B cell (primary cell): ENCODE measurements at regions of chr20 and their contacts with region 1.

Region 1: DNA sequence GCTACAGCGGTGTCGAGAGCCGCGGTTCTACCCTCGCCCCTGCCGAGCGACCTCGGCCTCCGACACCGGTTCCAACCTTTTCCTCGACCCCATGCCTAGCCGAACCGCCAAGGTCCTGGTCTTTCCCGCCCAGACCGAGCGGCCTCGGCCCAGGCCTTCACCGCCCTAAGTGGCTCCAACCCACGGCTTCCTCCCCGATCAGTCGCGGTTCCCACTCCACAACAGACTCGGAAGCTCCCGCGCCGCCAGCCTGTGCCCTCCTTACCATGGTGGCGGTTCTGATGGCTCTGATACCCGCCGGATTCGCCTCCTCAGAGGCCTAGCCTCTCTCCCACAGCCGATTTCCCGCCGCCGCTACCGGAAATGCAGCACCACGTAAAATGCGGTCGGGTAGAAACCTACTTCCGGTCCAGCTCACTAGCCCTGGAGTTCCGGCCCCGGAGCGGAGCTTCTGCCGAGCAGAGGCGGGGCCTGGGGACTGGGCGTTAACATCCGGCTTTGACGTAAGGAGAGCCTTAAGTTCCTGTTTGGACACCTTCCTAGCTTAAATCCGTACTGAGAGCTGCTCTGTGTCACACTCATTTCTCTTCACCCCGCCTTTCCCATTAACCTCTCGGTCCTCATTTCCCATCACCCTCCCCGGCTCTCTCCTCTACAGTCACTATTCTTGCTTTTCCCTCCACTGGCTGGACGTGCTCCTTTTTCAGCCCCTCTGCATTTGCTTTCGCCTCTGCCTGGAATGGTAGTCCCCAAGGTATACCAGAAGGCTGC is at the start of gene SNRPB:
- DNase-seq: peak; percentile 98
- ATAC-seq: peak; percentile 94
- H3K4me3 ChIP-seq: peak within 1 kb of the TSS; percentile 74 to 98 (median 91)
- H3K4me3 Mint-ChIP-seq: peak within 1 kb of the TSS; percentile 99
- H3K27ac ChIP-seq: peak within 1 kb of the TSS; percentile 96 to 98
- H3K27ac Mint-ChIP-seq: peak within 1 kb of the TSS; percentile 100
- H3K4me1 ChIP-seq: peaks cover 19 to 20% of the 10 kb centered on the region in 2 donors
- H3K4me1 Mint-ChIP-seq: peaks cover 37% of the 10 kb centered on the region
- H3K27me3 ChIP-seq: no peaks in the 10 kb centered on the region
- H3K27me3 Mint-ChIP-seq: no peaks in the 10 kb centered on the region
- CTCF ChIP-seq: no peak
- total RNA-seq, gene SNRPB: 117 and 123 TPM in 2 replicates

Region 2: GRCh38 chr20:1392823-1393506 is 1077.6 kb before region 1 on chr20 and contains the start of gene FKBP1A:
- CTCF ChIA-PET with region 1: no interaction called
- POLR2A ChIA-PET with region 1: no interaction called
- intact Hi-C with region 1: loop called (anchors 5 kb)
- DNase-seq: peak; percentile 97
- ATAC-seq: peak; percentile 88
- H3K4me3 ChIP-seq: peak within 1 kb of the TSS; percentile 66 to 93 (median 76)
- H3K4me3 Mint-ChIP-seq: peak within 1 kb of the TSS; percentile 100
- H3K27ac ChIP-seq: peak within 1 kb of the TSS; percentile 82 to 84
- H3K27ac Mint-ChIP-seq: peak within 1 kb of the TSS; percentile 100
- H3K4me1 ChIP-seq: peaks cover 64 to 66% of the 10 kb centered on the region in 2 donors
- H3K4me1 Mint-ChIP-seq: peaks cover 83% of the 10 kb centered on the region
- H3K27me3 ChIP-seq: no peaks in the 10 kb centered on the region
- H3K27me3 Mint-ChIP-seq: no peaks in the 10 kb centered on the region
- CTCF ChIP-seq: no peak
- total RNA-seq, gene FKBP1A: 86.5 and 86.7 TPM in 2 replicates

Region 3: DNA sequence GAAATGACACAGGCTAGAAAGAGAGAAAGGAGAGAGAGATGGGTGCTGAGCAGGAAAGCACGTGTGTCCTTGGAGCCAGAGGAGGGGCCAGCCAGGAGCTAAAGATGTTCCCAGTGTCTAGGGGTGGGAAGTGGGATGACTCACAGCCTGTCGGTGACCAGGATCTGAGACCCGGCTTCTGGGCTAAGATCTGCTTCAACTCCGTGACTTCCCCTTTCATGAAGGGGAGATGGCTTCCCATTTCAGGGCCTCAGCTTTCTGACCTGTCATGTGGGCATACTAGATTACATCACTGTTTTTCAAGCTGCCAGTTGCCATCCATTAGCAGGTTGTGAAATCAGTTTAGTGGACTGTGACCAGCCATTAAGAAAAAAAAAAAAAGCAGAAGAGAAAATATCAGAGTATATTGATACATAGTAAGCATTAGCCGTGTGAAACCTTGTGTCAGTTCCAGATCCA is 169.4 kb before region 1 on chr20:
- CTCF ChIA-PET with region 1: no interaction called
- POLR2A ChIA-PET with region 1: interaction called, 10 read pairs
- intact Hi-C with region 1: no loop called
- DNase-seq: peak; percentile 89
- ATAC-seq: peak; percentile 95
- H3K4me3 ChIP-seq: peak overlapping the region in 2 of 5 experiments; percentile 2 to 27
- H3K4me3 Mint-ChIP-seq: peak overlapping the region; percentile 61
- H3K27ac ChIP-seq: peak overlapping the region; percentile 82 to 91
- H3K27ac Mint-ChIP-seq: peak overlapping the region; percentile 93
- H3K4me1 ChIP-seq: peaks cover 23 to 24% of the 10 kb centered on the region in 2 donors
- H3K4me1 Mint-ChIP-seq: peaks cover 22% of the 10 kb centered on the region
- H3K27me3 ChIP-seq: peaks cover 0 to 6% (median 0%) of the 10 kb centered on the region in 4 experiments
- H3K27me3 Mint-ChIP-seq: no peaks in the 10 kb centered on the region
- CTCF ChIP-seq: no peak

Region 4: GRCh38 chr20:2508631-2509467 is 38.2 kb after region 1 on chr20 and contains the start of gene ZNF343:
- CTCF ChIA-PET with region 1: interaction called, 4 read pairs
- POLR2A ChIA-PET with region 1: interaction called, 4 read pairs
- intact Hi-C with region 1: loop called (anchors 1 kb)
- DNase-seq: peak; percentile 89
- ATAC-seq: peak; percentile 91
- H3K4me3 ChIP-seq: peak within 1 kb of the TSS; percentile 75 to 95 (median 91)
- H3K4me3 Mint-ChIP-seq: peak within 1 kb of the TSS; percentile 100
- H3K27ac ChIP-seq: peak within 1 kb of the TSS; percentile 64 to 77
- H3K27ac Mint-ChIP-seq: peak within 1 kb of the TSS; percentile 99
- H3K4me1 ChIP-seq: peaks cover 8 to 16% of the 10 kb centered on the region in 2 donors
- H3K4me1 Mint-ChIP-seq: peaks cover 20% of the 10 kb centered on the region
- H3K27me3 ChIP-seq: peaks cover 0 to 6% (median 3%) of the 10 kb centered on the region in 4 experiments
- H3K27me3 Mint-ChIP-seq: peaks cover 27% of the 10 kb centered on the region
- CTCF ChIP-seq: no peak
- total RNA-seq, gene ZNF343: 19.8 and 23.4 TPM in 2 replicates

Region 5: GRCh38 chr20:2523919-2524708 is 53.5 kb after region 1 on chr20:
- CTCF ChIA-PET with region 1: interaction called, 11 read pairs
- POLR2A ChIA-PET with region 1: interaction called, 9 read pairs
- intact Hi-C with region 1: loop called (anchors 1 kb)
- DNase-seq: peak; percentile 91
- ATAC-seq: peak; percentile 87
- H3K4me3 ChIP-seq: peak overlapping the region; percentile 52 to 94 (median 84)
- H3K4me3 Mint-ChIP-seq: peak overlapping the region; percentile 90
- H3K27ac ChIP-seq: peak overlapping the region; percentile 49 to 72
- H3K27ac Mint-ChIP-seq: peak overlapping the region; percentile 77
- H3K4me1 ChIP-seq: peaks cover 9 to 19% of the 10 kb centered on the region in 2 donors
- H3K4me1 Mint-ChIP-seq: peaks cover 12% of the 10 kb centered on the region
- H3K27me3 ChIP-seq: peaks cover 0 to 14% (median 3%) of the 10 kb centered on the region in 4 experiments
- H3K27me3 Mint-ChIP-seq: peaks cover 3% of the 10 kb centered on the region
- CTCF ChIP-seq: peak; percentile 97

Region 6: DNA sequence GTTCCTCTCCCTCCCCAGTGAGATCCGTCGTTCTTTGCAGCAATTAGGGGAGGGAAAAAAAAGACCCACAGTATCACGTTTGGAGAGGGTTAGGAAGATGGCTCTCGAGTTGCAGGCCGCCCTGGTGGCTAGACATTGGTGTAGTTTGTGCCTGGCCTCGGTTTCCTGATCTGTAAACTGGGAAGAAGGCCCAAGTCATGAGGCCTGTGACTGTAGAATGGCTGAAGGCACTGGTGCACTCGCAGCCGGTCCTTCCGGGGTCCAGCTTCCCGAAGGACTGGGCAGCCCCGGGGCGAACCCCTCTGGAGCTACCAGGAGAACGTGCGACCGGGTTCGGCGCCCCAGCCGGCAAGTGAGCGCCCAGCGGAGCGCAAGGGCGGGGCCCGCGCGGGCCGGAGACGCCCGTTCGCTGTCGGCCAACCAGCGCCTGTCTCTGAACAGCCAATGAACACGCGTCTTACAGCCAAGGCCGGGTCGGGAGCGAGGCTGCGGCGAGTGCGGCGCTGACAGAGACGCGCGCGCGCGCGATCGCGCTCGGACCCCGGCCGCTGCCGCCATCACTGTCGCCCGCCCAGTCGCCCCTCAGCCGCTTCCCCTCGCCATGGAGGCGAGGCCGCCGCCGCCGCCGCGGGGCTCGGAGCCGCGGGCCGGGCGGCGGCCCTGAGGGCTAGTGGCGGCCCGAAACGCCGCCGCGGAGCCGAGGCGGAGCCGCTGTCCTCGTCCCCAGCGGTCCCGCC is 402.6 kb after region 1 on chr20 and contains the start of gene PTPRA:
- CTCF ChIA-PET with region 1: no interaction called
- POLR2A ChIA-PET with region 1: interaction called, 4 read pairs
- intact Hi-C with region 1: loop called (anchors 1 kb)
- DNase-seq: peak; percentile 92
- ATAC-seq: peak; percentile 94
- H3K4me3 ChIP-seq: peak within 1 kb of the TSS; percentile 77 to 85 (median 79)
- H3K4me3 Mint-ChIP-seq: peak within 1 kb of the TSS; percentile 92
- H3K27ac ChIP-seq: peak within 1 kb of the TSS; percentile 25 to 32
- H3K27ac Mint-ChIP-seq: peak within 1 kb of the TSS; percentile 84
- H3K4me1 ChIP-seq: peaks cover 27 to 31% of the 10 kb centered on the region in 2 donors
- H3K4me1 Mint-ChIP-seq: peaks cover 33% of the 10 kb centered on the region
- H3K27me3 ChIP-seq: peaks cover 0 to 11% (median 0%) of the 10 kb centered on the region in 4 experiments
- H3K27me3 Mint-ChIP-seq: peaks cover 8% of the 10 kb centered on the region
- CTCF ChIP-seq: no peak
- total RNA-seq, gene PTPRA: 64.2 and 70.0 TPM in 2 replicates